ENCODE measurements at regions of chr13 and their contacts with region 1.

Region 1: DNA sequence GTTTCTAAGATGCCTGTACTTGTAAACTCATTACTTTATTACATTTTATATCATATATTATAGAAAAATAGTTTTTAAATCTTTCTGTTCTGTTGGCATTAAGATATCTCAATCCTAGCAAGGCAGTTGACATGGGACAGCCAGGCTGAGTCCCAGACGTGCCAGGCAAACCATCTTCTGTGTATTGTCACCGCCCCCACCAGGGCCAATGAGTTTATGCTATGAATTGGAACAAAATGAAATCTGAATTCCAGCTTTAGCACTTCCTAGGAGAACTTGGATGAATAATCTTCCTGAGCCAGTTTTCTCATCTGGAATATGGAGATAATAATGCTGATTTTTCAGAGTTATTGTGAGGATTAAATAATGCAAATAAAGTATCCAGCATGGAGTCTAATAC is 79.9 kb upstream of the GSX1 start:
- DNase-seq: no peak
- H3K4me3 ChIP-seq: no peak overlapping the region
- H3K27ac ChIP-seq: no peak overlapping the region
- H3K4me1 ChIP-seq: no peaks in the 10 kb centered on the region
- H3K27me3 ChIP-seq: peaks cover 29% of the 10 kb centered on the region
- CTCF ChIP-seq: 0 out of 2 replicates have a peak, but pooled peaks have one; percentile 23

Region 2: DNA sequence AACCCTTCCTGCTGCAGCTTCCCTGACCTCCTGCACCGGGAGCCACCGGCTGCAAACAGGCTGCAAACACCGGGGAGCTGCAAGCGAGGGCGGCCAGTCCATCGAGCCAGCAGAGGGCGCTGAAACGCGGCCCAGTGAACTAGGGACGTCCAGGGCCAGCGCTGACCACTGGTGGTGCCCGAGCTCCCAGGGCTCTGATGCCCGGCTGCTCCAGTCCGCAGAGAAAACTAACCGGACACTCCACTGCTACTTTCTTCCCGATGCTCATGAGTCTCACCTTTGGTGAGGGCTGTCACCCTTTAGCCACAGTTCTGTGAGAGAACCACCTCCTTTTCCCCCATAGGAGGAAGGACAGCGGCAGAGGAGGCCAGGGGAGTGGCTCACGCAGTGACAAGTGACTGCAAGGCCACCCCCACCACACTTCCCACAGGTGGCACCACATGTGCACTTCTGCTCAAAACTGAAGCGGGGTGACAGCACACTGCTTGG is 179.2 kb before region 1 on chr13:
- CTCF ChIA-PET with region 1: no interaction called
- POLR2A ChIA-PET with region 1: no interaction called
- intact Hi-C with region 1: loop called (anchors 5 kb)
- DNase-seq: peak; percentile 48 to 81
- H3K4me3 ChIP-seq: peak overlapping the region; percentile 44; the same call in 1 of the 2 replicates
- H3K27ac ChIP-seq: no peak overlapping the region
- H3K4me1 ChIP-seq: no peaks in the 10 kb centered on the region
- H3K27me3 ChIP-seq: no peaks in the 10 kb centered on the region
- CTCF ChIP-seq: peak; percentile 87

Region 3: DNA sequence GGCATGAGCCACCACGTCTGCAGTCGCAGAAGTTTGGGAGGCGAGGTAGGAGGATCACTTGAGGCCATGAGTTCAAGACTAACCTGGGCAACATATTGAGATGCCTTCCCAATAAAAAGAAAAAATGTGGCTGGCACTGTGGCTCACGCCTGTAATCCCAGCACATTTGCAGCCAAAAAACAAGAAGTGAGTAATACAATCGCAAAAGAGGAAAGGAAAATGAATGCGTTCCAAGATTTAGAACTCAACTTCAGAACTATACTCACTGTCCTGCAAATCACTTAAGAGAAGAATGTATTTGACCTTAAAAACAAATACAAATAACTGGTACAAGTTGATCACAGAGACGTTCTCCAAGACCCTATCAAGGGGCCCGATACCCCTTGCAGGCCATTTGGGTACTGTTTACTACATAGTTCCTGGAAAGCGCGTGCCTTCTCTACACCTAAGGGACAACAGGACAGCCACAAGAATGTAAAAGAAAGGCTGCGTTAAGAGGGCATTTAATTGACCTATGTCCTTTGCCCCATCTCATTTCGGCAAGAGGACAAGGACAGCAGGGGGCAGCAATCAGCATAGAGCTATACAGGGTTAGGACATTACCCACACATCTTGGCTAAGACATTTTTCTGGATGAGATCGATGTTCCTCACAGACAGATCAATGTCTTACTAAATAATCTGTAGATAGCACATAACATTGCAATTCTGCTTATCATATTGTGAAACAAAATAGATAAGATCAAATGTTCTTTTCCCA is 346.6 kb after region 1 on chr13:
- CTCF ChIA-PET with region 1: no interaction called
- POLR2A ChIA-PET with region 1: no interaction called
- intact Hi-C with region 1: no loop called
- DNase-seq: peak in 1 of 2 experiments; percentile 12
- H3K4me3 ChIP-seq: no peak overlapping the region
- H3K27ac ChIP-seq: no peak overlapping the region
- H3K4me1 ChIP-seq: no peaks in the 10 kb centered on the region
- H3K27me3 ChIP-seq: peaks cover 45% of the 10 kb centered on the region
- CTCF ChIP-seq: peak; percentile 66